ENCODE measurements at regions of chr22 and their contacts with region 1.

Region 1: DNA sequence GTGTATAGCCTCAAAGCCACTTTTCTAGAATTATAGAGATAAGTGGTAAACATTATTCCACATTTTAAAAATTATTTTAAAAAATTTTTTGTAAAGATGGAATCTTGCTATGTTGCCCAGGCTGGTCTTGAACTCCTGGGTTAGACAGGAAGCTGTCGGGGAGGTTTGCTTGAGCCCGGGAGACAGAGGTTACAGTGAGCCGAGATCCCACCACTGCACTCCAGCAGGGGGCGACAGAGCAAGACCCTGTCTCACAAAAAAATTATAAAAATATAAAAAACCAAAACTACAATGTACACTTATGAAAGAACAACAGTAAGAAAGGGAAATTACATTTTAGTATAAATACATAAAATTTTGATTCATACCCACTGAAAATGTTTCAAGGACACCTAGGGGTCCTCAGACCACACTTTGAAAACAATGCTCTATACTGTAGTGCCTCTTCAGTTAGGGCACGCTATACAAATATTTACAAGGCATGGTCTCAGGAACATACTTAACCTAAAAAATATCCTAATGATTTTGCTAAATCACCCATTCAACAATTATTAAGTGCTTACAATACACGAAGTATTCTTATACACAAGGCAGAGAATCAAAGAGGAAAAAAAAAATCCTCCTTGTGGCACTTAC is 111.2 kb downstream of the MRTFA start:
- DNase-seq: peak in 1 of 2 experiments; percentile 71
- H3K4me3 ChIP-seq: no peak overlapping the region
- H3K27ac ChIP-seq: no peak overlapping the region
- H3K4me1 ChIP-seq: no peaks in the 10 kb centered on the region
- H3K27me3 ChIP-seq: no peaks in the 10 kb centered on the region
- CTCF ChIP-seq: peak; percentile 57 to 68 (median 67)
- EP300 ChIP-seq: no peak
- POLR2A ChIP-seq: no peak
- RAD21 ChIP-seq: peak; percentile 50 to 62

Region 2: DNA sequence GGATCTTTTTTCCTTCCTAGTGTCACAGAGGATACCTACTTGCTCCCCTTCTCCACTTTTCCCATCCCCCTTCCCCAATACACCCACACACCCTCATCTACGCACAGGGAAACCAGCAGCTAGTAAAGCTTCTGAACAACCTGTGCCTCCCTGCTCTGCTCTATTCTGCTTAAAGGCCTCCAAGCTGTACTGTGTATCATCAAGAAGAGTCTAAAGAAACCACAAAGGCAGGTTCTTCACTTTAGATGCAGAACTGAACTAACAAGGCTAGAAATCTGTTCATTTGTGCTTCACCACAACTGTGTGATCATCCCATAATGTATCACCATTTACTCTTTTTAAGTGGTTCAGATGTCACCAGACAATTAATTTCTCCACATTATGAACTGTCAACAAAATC is 22.4 kb before region 1 on chr22:
- CTCF ChIA-PET with region 1: interaction called, 31 read pairs
- POLR2A ChIA-PET with region 1: no interaction called
- DNase-seq: no peak
- H3K4me3 ChIP-seq: no peak overlapping the region
- H3K27ac ChIP-seq: no peak overlapping the region
- H3K4me1 ChIP-seq: peaks cover 0 to 4% (median 2%) of the 10 kb centered on the region in 4 experiments; a peak in 4 of 7 replicates
- H3K27me3 ChIP-seq: no peaks in the 10 kb centered on the region
- CTCF ChIP-seq: no peak
- EP300 ChIP-seq: no peak
- POLR2A ChIP-seq: no peak
- RAD21 ChIP-seq: no peak

Region 3: DNA sequence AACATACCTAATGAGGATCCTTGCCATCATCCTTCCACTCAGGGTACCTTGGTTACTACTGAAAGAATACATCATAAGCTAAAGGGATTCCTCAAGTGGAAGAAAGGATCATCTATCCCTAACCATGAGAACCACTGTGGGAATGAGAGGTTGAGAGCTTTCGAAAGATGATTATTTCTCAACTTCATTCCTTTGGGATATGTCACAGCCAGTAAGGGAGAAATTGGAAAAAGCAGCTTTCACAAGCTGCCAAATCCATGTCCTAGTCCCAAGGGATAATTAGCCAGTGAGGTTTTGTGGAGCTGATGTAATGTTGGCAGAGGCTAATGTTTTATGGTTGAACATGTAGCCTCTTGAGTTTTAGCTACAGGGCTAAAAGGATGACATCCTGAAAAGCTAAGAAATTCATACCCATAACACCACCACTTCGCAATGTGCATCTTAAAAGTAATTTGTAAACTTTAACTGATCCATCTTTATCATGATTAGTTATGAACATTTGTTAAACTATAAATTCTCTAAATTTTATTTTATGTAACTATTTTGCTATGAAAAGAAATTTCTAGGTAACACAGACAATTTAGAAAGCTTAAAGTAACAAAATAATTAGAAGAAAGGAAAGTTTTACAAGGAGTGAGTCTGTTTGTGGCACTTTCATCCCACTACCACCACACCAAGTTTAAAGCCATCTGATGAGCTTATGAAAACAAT is 12.8 kb before region 1 on chr22:
- CTCF ChIA-PET with region 1: interaction called, 31 read pairs
- POLR2A ChIA-PET with region 1: no interaction called
- DNase-seq: no peak
- H3K4me3 ChIP-seq: no peak overlapping the region
- H3K27ac ChIP-seq: no peak overlapping the region
- H3K4me1 ChIP-seq: peaks cover 0 to 7% (median 4%) of the 10 kb centered on the region in 4 experiments; a peak in 3 of 7 replicates
- H3K27me3 ChIP-seq: no peaks in the 10 kb centered on the region
- CTCF ChIP-seq: no peak
- EP300 ChIP-seq: no peak
- POLR2A ChIP-seq: no peak
- RAD21 ChIP-seq: no peak

Region 4: GRCh38 chr22:40553014-40553579 is 27.7 kb after region 1 on chr22:
- CTCF ChIA-PET with region 1: no interaction called
- POLR2A ChIA-PET with region 1: no interaction called
- DNase-seq: no peak
- H3K4me3 ChIP-seq: no peak overlapping the region
- H3K27ac ChIP-seq: no peak overlapping the region
- H3K4me1 ChIP-seq: peaks cover 3 to 12% (median 10%) of the 10 kb centered on the region in 4 experiments
- H3K27me3 ChIP-seq: no peaks in the 10 kb centered on the region
- CTCF ChIP-seq: no peak
- EP300 ChIP-seq: no peak
- POLR2A ChIP-seq: no peak
- RAD21 ChIP-seq: no peak

Region 5: GRCh38 chr22:40583053-40583741 is 57.8 kb after region 1 on chr22:
- CTCF ChIA-PET with region 1: interaction called, 15 read pairs
- POLR2A ChIA-PET with region 1: interaction called, 3 read pairs
- DNase-seq: no peak
- H3K4me3 ChIP-seq: no peak overlapping the region
- H3K27ac ChIP-seq: no peak overlapping the region
- H3K4me1 ChIP-seq: peaks cover 0 to 2% (median 0%) of the 10 kb centered on the region in 4 experiments; a peak in 2 of 7 replicates
- H3K27me3 ChIP-seq: no peaks in the 10 kb centered on the region
- CTCF ChIP-seq: no peak
- EP300 ChIP-seq: no peak
- POLR2A ChIP-seq: no peak
- RAD21 ChIP-seq: no peak

Region 6: GRCh38 chr22:40641269-40641668 is 115.9 kb after region 1 on chr22:
- CTCF ChIA-PET with region 1: interaction called, 67 read pairs
- POLR2A ChIA-PET with region 1: interaction called, 5 read pairs
- DNase-seq: no peak
- H3K4me3 ChIP-seq: no peak overlapping the region
- H3K27ac ChIP-seq: no peak overlapping the region
- H3K4me1 ChIP-seq: peaks cover 0 to 3% (median 2%) of the 10 kb centered on the region in 4 experiments; a peak in 4 of 7 replicates
- H3K27me3 ChIP-seq: no peaks in the 10 kb centered on the region
- CTCF ChIP-seq: no peak
- EP300 ChIP-seq: no peak
- POLR2A ChIP-seq: no peak
- RAD21 ChIP-seq: no peak

Region 7: GRCh38 chr22:40651563-40652501 is 126.5 kb after region 1 on chr22:
- CTCF ChIA-PET with region 1: interaction called, 67 read pairs
- POLR2A ChIA-PET with region 1: interaction called, 4 read pairs
- DNase-seq: peak; percentile 58 to 78
- H3K4me3 ChIP-seq: 0 out of 8 replicates have a peak overlapping the region, but pooled peaks of 1 of the 4 experiments have one; percentile 6
- H3K27ac ChIP-seq: no peak overlapping the region
- H3K4me1 ChIP-seq: peaks cover 0 to 5% (median 2%) of the 10 kb centered on the region in 4 experiments; a peak in 3 of 7 replicates
- H3K27me3 ChIP-seq: no peaks in the 10 kb centered on the region
- CTCF ChIP-seq: no peak
- EP300 ChIP-seq: no peak
- POLR2A ChIP-seq: no peak
- RAD21 ChIP-seq: no peak

Measured in H1 (cell line).